ENCODE measurements at regions of chr6 and their contacts with region 1.

Region 1: DNA sequence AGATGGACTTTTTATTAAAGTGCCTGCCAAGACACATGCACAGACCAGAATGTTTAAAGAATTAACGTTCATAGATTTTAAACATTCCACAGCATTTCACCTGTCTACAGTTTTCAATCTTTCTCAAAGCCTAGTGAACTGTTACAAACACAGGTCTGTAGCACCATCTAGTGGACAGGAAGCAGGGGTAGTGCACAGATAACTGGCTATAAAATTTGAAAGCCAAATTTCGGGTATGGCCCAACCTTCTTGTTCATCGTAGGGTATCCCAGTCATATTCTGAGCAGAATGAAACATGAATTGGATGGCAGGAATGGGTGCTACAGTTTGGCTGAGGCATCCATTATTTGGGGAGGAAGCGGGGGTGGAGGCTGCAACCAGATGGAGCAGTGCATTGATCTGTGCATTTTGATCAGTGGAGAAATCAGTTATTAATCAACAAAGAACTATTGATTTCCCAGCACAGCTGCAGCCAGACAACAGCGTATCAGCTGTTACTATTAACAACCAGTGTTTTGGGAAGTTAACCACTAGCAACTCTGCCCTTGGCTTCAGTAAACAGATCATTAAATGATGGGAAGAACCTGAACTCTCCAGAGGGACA is 56.1 kb upstream of the B3GAT2 start:
- DNase-seq: no peak
- ATAC-seq: peak; percentile 75
- H3K4me3 Mint-ChIP-seq: no peak overlapping the region
- H3K27ac Mint-ChIP-seq: no peak overlapping the region
- H3K4me1 Mint-ChIP-seq: peaks cover 2% of the 10 kb centered on the region
- H3K27me3 Mint-ChIP-seq: peaks cover 11% of the 10 kb centered on the region
- CTCF ChIP-seq: peak; percentile 72

Region 2: DNA sequence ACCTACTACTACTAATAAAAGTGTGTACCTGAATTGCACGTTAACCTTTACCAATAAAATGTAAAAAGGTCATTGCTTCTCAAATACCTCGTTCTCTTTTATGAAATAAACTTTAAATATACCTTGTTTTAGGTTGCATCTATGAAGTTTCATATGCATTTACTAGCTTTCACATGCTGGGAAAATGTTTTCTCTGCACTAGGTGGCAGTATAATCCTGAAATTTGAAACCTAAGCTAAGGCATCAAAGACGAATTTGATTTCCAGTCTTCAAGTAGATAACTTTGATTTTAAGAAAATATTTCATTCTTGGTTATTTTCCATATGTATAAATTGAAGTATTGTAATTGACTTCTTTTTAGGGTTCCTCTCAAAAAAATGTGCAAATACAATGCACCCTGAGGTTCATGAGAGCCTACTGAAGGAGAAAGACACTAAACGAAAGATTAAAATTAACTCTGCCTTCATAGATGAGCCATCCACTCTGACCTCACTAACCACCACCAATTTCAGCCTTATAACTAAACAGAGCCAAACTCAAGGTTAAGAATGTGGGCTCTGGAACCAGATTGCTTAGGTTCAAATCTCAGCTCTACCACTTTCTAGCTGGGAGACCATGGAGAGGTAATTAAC is 702.8 kb before region 1 on chr6:
- CTCF ChIA-PET with region 1: interaction called, 52 read pairs
- POLR2A ChIA-PET with region 1: no interaction called
- intact Hi-C with region 1: loop called (anchors 1 kb)
- DNase-seq: no peak
- ATAC-seq: no peak
- H3K4me3 Mint-ChIP-seq: no peak overlapping the region
- H3K27ac Mint-ChIP-seq: no peak overlapping the region
- H3K4me1 Mint-ChIP-seq: no peaks in the 10 kb centered on the region
- H3K27me3 Mint-ChIP-seq: peaks cover 11% of the 10 kb centered on the region
- CTCF ChIP-seq: no peak

Region 3: GRCh38 chr6:70520575-70520974 is 492.4 kb before region 1 on chr6:
- CTCF ChIA-PET with region 1: no interaction called
- POLR2A ChIA-PET with region 1: no interaction called
- intact Hi-C with region 1: loop called (anchors 1 kb)
- DNase-seq: no peak
- ATAC-seq: no peak
- H3K4me3 Mint-ChIP-seq: no peak overlapping the region
- H3K27ac Mint-ChIP-seq: no peak overlapping the region
- H3K4me1 Mint-ChIP-seq: no peaks in the 10 kb centered on the region
- H3K27me3 Mint-ChIP-seq: no peaks in the 10 kb centered on the region
- CTCF ChIP-seq: no peak

Region 4: DNA sequence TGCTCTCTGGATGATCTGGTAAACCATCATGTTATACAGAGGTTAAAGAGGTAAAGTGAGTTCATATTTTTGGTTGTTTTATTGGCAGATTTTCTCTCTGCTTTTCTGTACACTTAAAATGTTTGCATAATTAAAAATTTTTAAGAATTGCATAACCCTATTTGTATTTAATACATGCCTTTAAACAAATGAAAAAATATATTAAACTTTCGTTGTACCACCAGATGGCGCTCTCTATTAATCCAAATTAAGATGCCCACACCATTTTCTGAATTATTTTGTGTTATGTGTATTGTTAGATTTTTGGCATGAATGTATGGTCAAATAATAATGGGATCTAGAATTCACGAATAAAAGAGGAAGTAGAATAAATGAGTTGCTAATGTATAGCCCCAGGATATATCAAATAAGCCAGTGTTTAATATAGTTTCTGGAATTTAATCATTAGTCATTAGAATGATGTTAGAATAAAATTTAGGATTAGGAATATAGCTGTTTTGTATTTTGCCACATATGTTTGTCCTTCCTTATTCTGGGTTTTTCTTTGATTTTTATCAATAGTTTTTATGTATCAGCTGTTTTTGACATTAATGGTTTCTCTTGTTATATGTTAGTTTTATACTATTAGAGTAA is 306.4 kb before region 1 on chr6:
- CTCF ChIA-PET with region 1: interaction called, 7 read pairs
- POLR2A ChIA-PET with region 1: no interaction called
- intact Hi-C with region 1: loop called (anchors 1 kb)
- DNase-seq: no peak
- ATAC-seq: no peak
- H3K4me3 Mint-ChIP-seq: no peak overlapping the region
- H3K27ac Mint-ChIP-seq: no peak overlapping the region
- H3K4me1 Mint-ChIP-seq: peaks cover 21% of the 10 kb centered on the region
- H3K27me3 Mint-ChIP-seq: no peaks in the 10 kb centered on the region
- CTCF ChIP-seq: peak; percentile 69

Region 5: GRCh38 chr6:70980725-70981124 is 32.2 kb before region 1 on chr6:
- CTCF ChIA-PET with region 1: no interaction called
- POLR2A ChIA-PET with region 1: no interaction called
- intact Hi-C with region 1: no loop called
- DNase-seq: no peak
- ATAC-seq: no peak
- H3K4me3 Mint-ChIP-seq: no peak overlapping the region
- H3K27ac Mint-ChIP-seq: no peak overlapping the region
- H3K4me1 Mint-ChIP-seq: peaks cover 7% of the 10 kb centered on the region
- H3K27me3 Mint-ChIP-seq: peaks cover 13% of the 10 kb centered on the region
- CTCF ChIP-seq: no peak

Region 6: GRCh38 chr6:71349395-71349794 is 336.4 kb after region 1 on chr6:
- CTCF ChIA-PET with region 1: no interaction called
- POLR2A ChIA-PET with region 1: no interaction called
- intact Hi-C with region 1: loop called (anchors 10 kb)
- DNase-seq: no peak
- ATAC-seq: no peak
- H3K4me3 Mint-ChIP-seq: no peak overlapping the region
- H3K27ac Mint-ChIP-seq: no peak overlapping the region
- H3K4me1 Mint-ChIP-seq: peaks cover 19% of the 10 kb centered on the region
- H3K27me3 Mint-ChIP-seq: peaks cover under 1% of the 10 kb centered on the region
- CTCF ChIP-seq: peak; percentile 54

Measured in activated B cell treated with CpG ODN at 0.5 μM for 24 hours (primary cell).